Sigmoid colon (tissue), 7 donors: ENCODE measurements at regions of chr2 and their contacts with region 1.

Region 1: GRCh38 chr2:54704688-54705605 is 18.5 kb upstream of the EML6 start:
- DNase-seq: no peak
- H3K4me3 ChIP-seq: no peak overlapping the region
- H3K27ac ChIP-seq: no peak overlapping the region
- H3K4me1 ChIP-seq: peaks cover 0 to 14% (median 12%) of the 10 kb centered on the region in 4 donors
- H3K27me3 ChIP-seq: peaks cover 0 to 12% (median 0%) of the 10 kb centered on the region in 3 donors
- CTCF ChIP-seq: peak in 3 of 4 experiments; percentile 33 to 62 (median 48)
- EP300 ChIP-seq: no peak
- POLR2A ChIP-seq: no peak

Region 2: DNA sequence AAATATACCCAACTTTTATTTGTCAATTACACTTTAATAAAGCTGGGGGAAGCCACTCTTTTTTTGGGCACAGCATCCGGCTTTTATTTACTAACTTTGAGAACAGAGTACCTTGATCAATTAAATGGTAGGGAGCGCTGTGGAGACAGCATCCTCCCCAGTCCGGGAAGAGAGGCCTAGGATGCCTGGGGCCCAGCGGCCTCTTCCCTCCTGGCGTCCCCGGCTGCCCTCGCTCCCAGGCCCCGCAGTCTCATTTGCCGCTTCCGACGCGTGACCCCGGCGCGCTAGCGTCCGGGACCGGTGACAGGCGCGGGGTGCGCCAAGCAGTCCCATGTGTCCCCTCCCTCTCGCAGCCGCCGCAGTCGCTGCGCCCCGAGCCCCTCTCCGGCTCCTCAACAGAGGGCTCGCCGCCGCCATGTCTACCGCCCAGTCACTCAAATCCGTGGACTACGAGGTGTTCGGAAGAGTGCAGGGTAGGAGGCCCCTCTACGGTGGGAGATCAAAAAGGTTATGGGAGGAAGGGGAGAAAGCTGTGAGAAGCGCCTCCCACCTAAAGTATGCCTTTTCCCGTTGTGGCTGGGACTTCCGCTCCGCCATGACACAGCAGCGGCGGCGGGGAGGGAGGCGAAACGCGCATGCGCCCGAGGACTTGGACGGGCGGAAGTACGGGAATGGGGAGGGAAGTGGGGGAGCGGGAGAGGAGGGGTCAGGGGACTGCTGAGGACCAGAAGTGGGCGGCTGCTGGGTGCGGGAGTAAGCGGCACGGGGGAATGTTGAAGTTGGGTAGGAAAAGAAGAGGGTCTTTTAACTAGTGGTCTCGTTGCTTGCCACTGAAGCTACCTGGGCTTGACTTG is 589.4 kb before region 1 on chr2 and contains the start of gene ACYP2:
- intact Hi-C with region 1: loop called (anchors 2 kb)
- DNase-seq: peak; percentile 98
- H3K4me3 ChIP-seq: peak within 1 kb of the TSS; percentile 60 to 78 (median 72)
- H3K27ac ChIP-seq: peak within 1 kb of the TSS; percentile 92 to 98 (median 96)
- H3K4me1 ChIP-seq: peaks cover 0 to 12% (median 5%) of the 10 kb centered on the region in 4 donors
- H3K27me3 ChIP-seq: no peaks in the 10 kb centered on the region
- CTCF ChIP-seq: peak in 2 of 4 experiments; percentile 11 to 26
- EP300 ChIP-seq: no peak
- POLR2A ChIP-seq: peak; percentile 55 to 72
- total RNA-seq, gene ACYP2: 15.8 to 32.0 (median 26.7) TPM

Region 3: GRCh38 chr2:54161660-54162424 is 543.1 kb before region 1 on chr2:
- intact Hi-C with region 1: loop called (anchors 10 kb)
- DNase-seq: no peak
- H3K4me3 ChIP-seq: no peak overlapping the region
- H3K27ac ChIP-seq: peak overlapping the region in 1 of 4 donors; percentile 15
- H3K4me1 ChIP-seq: peaks cover 0 to 8% (median 3%) of the 10 kb centered on the region in 4 donors
- H3K27me3 ChIP-seq: no peaks in the 10 kb centered on the region
- CTCF ChIP-seq: no peak
- EP300 ChIP-seq: no peak
- POLR2A ChIP-seq: no peak

Region 4: DNA sequence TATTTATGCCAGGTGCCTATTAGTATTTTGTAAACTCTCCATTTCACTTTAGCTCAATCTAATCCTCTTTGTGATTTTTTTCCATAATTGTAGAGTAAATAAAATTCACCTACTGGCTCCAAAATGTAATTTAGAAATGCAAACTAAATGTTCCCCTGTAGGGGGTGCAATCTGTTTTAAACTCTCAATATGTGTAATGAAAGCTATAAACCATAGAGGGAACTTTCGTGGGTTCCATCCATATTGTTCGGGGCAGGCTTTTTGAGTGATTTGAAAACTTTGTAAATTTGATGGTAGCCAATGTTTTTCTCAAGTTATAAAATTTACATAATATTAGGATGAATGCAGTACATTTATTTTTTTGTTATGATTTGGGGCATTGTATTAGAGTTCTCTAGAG is 498.4 kb before region 1 on chr2:
- intact Hi-C with region 1: loop called (anchors 5 kb)
- DNase-seq: no peak
- H3K4me3 ChIP-seq: no peak overlapping the region
- H3K27ac ChIP-seq: no peak overlapping the region
- H3K4me1 ChIP-seq: peaks cover 0 to 21% (median 14%) of the 10 kb centered on the region in 4 donors
- H3K27me3 ChIP-seq: no peaks in the 10 kb centered on the region
- CTCF ChIP-seq: peak; percentile 51 to 63 (median 53)
- EP300 ChIP-seq: no peak
- POLR2A ChIP-seq: no peak

Region 5: DNA sequence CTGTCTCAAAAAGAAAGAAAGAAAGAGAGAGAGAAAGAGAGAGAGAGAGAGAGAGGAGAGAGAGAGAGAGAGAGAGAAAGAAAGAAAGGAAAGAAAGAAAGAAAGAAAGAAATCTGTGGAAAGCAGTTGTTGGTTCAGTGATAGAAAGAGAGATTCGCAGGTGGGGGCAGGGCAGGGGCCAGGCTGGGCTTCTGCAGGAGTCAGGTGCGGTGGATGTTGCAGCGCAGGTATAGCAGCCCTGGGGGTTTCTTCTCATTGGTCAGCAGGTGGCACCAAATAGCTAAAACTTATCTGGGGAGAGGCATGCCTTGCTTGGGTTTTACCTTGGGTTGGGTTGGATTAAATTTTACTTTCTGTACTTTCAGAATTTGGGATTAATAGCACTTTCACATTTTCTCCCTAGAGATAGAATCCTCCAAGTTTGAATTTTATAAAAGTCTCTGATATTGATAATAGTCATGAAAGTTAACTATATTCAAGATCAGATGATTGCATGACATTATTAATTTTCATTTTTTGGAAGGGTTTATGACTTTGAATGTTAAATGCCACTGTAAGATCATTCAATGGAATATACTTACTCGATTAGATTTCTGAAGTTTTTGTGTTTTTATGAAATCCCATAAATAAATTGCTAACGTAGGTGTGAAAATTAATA is 182.2 kb before region 1 on chr2:
- intact Hi-C with region 1: loop called (anchors 5 kb)
- DNase-seq: no peak
- H3K4me3 ChIP-seq: no peak overlapping the region
- H3K27ac ChIP-seq: no peak overlapping the region
- H3K4me1 ChIP-seq: peaks cover 0 to 53% (median 32%) of the 10 kb centered on the region in 4 donors
- H3K27me3 ChIP-seq: no peaks in the 10 kb centered on the region
- CTCF ChIP-seq: peak; percentile 4 to 54 (median 44)
- EP300 ChIP-seq: no peak
- POLR2A ChIP-seq: no peak

Region 6: GRCh38 chr2:54657664-54658083 is 47.3 kb before region 1 on chr2:
- intact Hi-C with region 1: loop called (anchors 2 kb)
- DNase-seq: peak; percentile 76
- H3K4me3 ChIP-seq: no peak overlapping the region
- H3K27ac ChIP-seq: peak overlapping the region in 2 of 4 donors; percentile 28 to 48
- H3K4me1 ChIP-seq: peaks cover 0 to 10% (median 3%) of the 10 kb centered on the region in 4 donors
- H3K27me3 ChIP-seq: no peaks in the 10 kb centered on the region
- CTCF ChIP-seq: peak in 2 of 4 experiments; percentile 30 to 46
- EP300 ChIP-seq: no peak
- POLR2A ChIP-seq: no peak